ENCODE measurements at regions of chr7 and their contacts with region 1.

Region 1: DNA sequence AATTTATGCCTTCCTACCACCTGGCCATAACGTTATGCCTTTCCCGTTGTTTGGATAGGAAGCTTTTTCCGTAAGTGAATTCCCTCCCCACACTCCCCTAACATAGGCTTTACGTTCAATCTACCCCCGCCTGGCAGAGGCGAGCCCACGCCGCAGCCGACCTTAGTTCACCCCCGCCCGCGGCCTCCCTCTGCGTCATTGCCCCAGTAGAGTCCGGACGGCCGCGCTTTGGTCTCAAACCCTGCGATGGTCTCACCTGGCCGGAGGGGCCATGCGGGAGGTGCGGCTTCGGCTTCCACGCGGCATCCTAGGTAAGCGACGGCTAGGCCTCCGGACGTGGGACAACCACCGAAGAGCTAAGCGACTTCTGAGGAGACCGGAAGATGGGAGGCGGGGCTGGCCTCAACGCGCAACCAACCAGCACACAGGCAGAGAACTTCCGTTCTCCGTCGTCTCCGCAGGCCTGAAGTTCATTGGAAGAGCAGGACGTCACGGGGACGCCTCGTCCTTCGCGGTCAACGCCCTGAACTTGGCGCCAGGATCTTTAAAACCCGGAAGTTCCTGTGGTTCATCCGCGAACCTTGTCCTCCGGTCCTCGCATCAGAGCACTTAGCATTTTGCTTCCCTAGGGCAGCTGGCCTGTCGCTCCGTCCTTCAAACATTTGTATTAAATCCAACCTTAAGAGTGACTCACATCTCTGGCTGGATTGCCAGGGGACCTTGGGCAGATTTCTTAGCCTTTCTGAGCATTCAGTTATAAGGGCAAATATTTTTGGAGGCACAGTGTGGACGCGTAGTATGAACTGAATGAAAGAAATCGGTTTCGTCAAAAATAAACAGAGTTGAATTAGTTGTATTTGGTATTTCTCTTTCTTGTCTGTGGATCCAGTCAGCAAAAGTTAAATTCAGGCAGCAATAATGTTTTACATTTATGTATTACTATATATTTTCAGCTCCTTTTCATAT is at the start of gene CHCHD2:
- DNase-seq: peak; percentile 94 to 99
- H3K4me3 ChIP-seq: peak within 1 kb of the TSS; percentile 70 to 74
- H3K27ac ChIP-seq: peak within 1 kb of the TSS; percentile 89 to 93
- H3K4me1 ChIP-seq: peaks cover 0 to 12% of the 10 kb centered on the region in 2 donors
- H3K27me3 ChIP-seq: no peaks in the 10 kb centered on the region
- CTCF ChIP-seq: no peak
- total RNA-seq, gene CHCHD2: 323 TPM

Region 2: GRCh38 chr7:54758702-54759592 is 1347.4 kb before region 1 on chr7 and contains the start of gene SEC61G:
- intact Hi-C with region 1: loop called (anchors 5 kb)
- DNase-seq: peak; percentile 89 to 98
- H3K4me3 ChIP-seq: peak within 1 kb of the TSS; percentile 78 to 92
- H3K27ac ChIP-seq: peak within 1 kb of the TSS; percentile 84 to 86
- H3K4me1 ChIP-seq: peaks cover 0 to 19% of the 10 kb centered on the region in 2 donors
- H3K27me3 ChIP-seq: no peaks in the 10 kb centered on the region
- CTCF ChIP-seq: peak in 1 of 3 experiments; percentile 12
- total RNA-seq, gene SEC61G: 166 TPM

Region 3: GRCh38 chr7:56009695-56010094 is 96.7 kb before region 1 on chr7:
- intact Hi-C with region 1: no loop called
- DNase-seq: no peak
- H3K4me3 ChIP-seq: no peak overlapping the region
- H3K27ac ChIP-seq: no peak overlapping the region
- H3K4me1 ChIP-seq: peaks cover 0 to 2% of the 10 kb centered on the region in 2 donors
- H3K27me3 ChIP-seq: no peaks in the 10 kb centered on the region
- CTCF ChIP-seq: no peak

Region 4: GRCh38 chr7:56051339-56052191 is 54.8 kb before region 1 on chr7 and contains the starts of genes CCT6A and PSPH:
- intact Hi-C with region 1: loop called (anchors 1 kb)
- DNase-seq: peak; percentile 87 to 99
- H3K4me3 ChIP-seq: peak within 1 kb of the TSS; percentile 94
- H3K27ac ChIP-seq: peak within 1 kb of the TSS; percentile 92 to 95
- H3K4me1 ChIP-seq: peaks cover 0 to 26% of the 10 kb centered on the region in 2 donors
- H3K27me3 ChIP-seq: no peaks in the 10 kb centered on the region
- CTCF ChIP-seq: no peak
- total RNA-seq, gene CCT6A: 86.2 TPM
- total RNA-seq, gene PSPH: not detected

Region 5: GRCh38 chr7:56092789-56093531 is 13.4 kb before region 1 on chr7 and contains the start of gene PHKG1:
- intact Hi-C with region 1: loop called (anchors 2 kb)
- DNase-seq: peak in 1 of 2 donors; percentile 91
- H3K4me3 ChIP-seq: peak within 1 kb of the TSS; percentile 13 to 37
- H3K27ac ChIP-seq: peak within 1 kb of the TSS; percentile 77 to 86
- H3K4me1 ChIP-seq: peaks cover 3 to 14% of the 10 kb centered on the region in 2 donors
- H3K27me3 ChIP-seq: no peaks in the 10 kb centered on the region
- CTCF ChIP-seq: peak; percentile 6 to 75 (median 67)
- total RNA-seq, gene PHKG1: 1.1 TPM

Region 6: GRCh38 chr7:56188823-56189346 is 82.5 kb after region 1 on chr7:
- intact Hi-C with region 1: loop called (anchors 1 kb)
- DNase-seq: peak in 1 of 2 donors; percentile 74
- H3K4me3 ChIP-seq: no peak overlapping the region
- H3K27ac ChIP-seq: peak overlapping the region; percentile 76 to 78
- H3K4me1 ChIP-seq: peaks cover 4 to 17% of the 10 kb centered on the region in 2 donors
- H3K27me3 ChIP-seq: no peaks in the 10 kb centered on the region
- CTCF ChIP-seq: no peak

Measured in ascending aorta (tissue), 2 donors.